SK-N-SH (cell line): ENCODE measurements at regions of chr12 and their contacts with region 1.

Region 1: DNA sequence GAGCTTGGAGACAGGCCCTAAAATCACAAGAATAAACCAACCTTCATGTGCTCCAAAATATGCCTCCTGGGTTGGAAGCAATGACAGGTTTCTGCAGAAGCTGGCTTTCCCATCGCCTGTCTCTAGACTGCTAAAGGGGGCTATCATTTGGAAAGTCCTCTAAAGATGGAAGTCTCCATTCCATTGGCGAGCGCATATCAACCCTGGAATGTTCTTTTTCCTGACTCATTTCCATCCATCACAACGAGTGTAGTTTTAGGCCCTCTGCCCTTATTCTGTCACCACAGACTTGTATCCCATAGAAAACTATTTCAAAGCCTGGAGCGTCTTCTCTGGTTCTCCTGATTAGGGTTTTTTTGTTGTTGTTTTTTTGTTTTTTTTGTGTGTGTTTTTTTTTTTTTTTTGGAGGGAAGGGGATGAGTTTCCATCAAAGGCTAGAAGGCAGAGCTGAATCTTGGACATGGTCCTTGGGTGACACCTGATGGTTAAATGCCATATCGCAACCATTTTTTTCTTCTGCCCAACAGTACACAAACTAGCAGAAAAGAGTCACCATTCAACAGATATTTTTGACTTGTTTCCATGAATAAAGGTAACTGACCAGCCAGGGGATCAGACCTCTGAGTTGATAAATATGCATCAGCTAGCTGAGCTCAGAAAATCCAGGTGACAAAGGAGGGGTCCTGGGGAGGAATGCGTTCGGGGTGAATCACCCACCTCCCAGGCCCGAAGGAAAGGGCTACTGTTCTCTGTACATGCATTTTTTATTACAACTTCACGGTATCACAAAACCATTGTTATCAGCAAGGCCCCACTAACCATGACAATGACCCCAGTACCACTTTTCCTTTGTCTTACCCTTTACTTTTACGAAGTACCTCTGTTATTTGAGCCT is 40.5 kb downstream of the KCNA5 start:
- DNase-seq: peak; percentile 66
- H3K4me3 ChIP-seq: peak overlapping the region in 1 of 2 experiments; percentile 4; a peak in 1 of 4 replicates
- H3K27ac ChIP-seq: no peak overlapping the region
- H3K4me1 ChIP-seq: peaks cover 0 to 18% of the 10 kb centered on the region in 2 experiments; a peak in 3 of 4 replicates
- H3K27me3 ChIP-seq: peaks cover 15% of the 10 kb centered on the region; the same call in 1 of the 2 replicates
- CTCF ChIP-seq: peak; percentile 79
- EP300 ChIP-seq: no peak
- RAD21 ChIP-seq: peak; percentile 86

Region 2: GRCh38 chr12:5022465-5023061 is 61.6 kb before region 1 on chr12:
- CTCF ChIA-PET with region 1: interaction called, 85 read pairs
- POLR2A ChIA-PET with region 1: no interaction called
- DNase-seq: peak; percentile 70
- H3K4me3 ChIP-seq: no peak overlapping the region
- H3K27ac ChIP-seq: no peak overlapping the region
- H3K4me1 ChIP-seq: no peaks in the 10 kb centered on the region
- H3K27me3 ChIP-seq: peaks cover 87% of the 10 kb centered on the region
- CTCF ChIP-seq: peak; percentile 79
- EP300 ChIP-seq: no peak
- RAD21 ChIP-seq: peak; percentile 80

Region 3: GRCh38 chr12:5114470-5114869 is 30.3 kb after region 1 on chr12:
- CTCF ChIA-PET with region 1: no interaction called
- POLR2A ChIA-PET with region 1: no interaction called
- DNase-seq: no peak
- H3K4me3 ChIP-seq: no peak overlapping the region
- H3K27ac ChIP-seq: no peak overlapping the region
- H3K4me1 ChIP-seq: no peaks in the 10 kb centered on the region
- H3K27me3 ChIP-seq: peaks cover 4% of the 10 kb centered on the region; the same call in 1 of the 2 replicates
- CTCF ChIP-seq: no peak
- EP300 ChIP-seq: no peak
- RAD21 ChIP-seq: no peak